GM10248 (cell line): ENCODE measurements at regions of chr5 and their contacts with region 1.

Region 1: DNA sequence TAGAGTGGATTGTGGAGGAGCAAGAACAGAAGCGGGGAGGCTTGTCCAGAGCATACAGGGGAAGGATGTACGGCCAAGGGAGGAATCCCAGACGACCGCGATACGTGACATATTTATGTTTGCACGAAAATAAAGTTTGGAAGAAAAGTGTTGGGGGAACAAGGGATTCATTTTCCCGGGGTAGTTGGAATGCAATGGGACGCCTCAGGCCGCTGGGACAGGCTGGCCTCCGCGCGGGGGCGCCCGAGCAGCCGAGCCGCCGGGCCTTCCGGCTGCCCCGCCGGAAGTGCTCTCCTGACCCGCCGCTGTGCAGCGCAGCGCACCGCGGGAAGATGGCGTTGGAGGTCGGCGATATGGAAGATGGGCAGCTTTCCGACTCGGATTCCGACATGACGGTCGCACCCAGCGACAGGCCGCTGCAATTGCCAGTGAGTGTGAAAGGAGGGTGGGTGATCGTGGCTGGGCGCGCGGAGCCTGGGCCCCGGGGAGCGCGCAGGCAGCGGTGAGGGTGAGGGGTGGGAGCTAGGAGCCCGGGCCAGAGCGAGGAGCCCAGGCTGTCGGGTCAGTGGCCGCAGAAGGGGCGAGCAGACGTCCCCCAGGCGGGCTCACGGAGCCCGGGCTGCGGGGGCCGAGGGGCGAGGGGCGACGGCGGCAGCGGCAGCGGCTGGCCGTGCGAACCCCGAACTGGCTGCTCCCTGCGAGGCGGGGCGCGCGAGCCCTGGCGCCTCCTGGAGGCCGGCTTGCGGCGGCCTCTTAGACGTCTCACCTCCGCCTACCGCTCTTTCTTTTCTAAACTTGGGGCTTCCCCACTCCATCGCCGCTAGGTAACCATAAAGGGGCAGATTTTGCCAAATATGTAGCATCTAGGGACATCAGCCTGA is at the start of gene PHAX:
- DNase-seq: peak; percentile 91
- CTCF ChIP-seq: peak; percentile 84

Region 2: DNA sequence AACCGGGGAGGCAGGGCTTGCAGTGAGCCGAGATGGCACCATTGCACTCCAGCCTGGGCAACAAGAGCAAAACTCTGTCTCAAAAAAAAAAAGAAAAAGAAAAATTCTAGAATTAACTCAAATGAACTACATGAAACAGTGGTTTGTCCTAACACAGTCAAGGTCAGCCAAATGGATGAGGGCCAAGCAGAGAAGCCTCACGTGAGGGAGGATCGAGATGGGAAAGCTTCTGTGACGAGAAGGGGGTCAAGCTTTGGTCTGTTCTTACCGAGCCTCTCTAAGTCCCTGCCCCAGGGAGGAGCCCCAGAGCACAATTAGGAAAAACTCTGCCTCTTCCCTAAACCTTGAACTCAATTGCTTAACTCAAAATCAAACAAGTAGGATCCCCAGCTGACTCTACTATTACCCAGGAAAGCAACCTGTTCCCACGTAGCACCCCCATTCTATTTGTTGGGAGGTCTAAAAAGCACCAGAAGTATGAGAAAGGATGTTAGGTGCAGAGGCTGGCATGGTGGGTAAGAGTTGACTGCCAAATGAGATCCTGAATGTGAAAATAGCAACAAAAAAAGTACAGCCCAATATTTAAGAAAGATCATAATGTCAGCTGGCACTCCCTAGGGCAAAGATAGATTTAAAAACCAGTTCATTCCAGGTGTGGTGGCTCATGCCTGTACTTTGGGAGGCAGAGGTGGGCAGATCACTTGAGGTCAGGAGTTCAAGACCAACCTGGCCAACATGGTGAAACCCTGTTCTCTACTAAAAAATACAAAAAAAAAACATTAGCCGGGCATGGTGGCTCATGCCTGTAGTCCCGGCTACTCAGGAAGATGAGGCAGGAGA is 13.1 kb before region 1 on chr5:
- CTCF ChIA-PET with region 1: interaction called, 13 read pairs
- POLR2A ChIA-PET with region 1: no interaction called
- DNase-seq: no peak
- CTCF ChIP-seq: no peak